Body of pancreas (tissue), 4 donors: ENCODE measurements at regions of chr5 and their contacts with region 1.

Region 1: GRCh38 chr5:141512390-141512910 is 23.6 kb downstream of the PCDHGC5 start:
- DNase-seq: peak; percentile 89 to 93 (median 90)
- ATAC-seq: peak; percentile 77
- H3K4me3 ChIP-seq: peak overlapping the region in 1 of 2 donors; percentile 11
- H3K27ac ChIP-seq: peak overlapping the region; percentile 16 to 65 (median 59)
- H3K4me1 ChIP-seq: peaks cover 24% of the 10 kb centered on the region
- H3K27me3 ChIP-seq: no peaks in the 10 kb centered on the region
- CTCF ChIP-seq: peak; percentile 66 to 91 (median 86)
- POLR2A ChIP-seq: peak in 1 of 3 donors; percentile 2

Region 2: DNA sequence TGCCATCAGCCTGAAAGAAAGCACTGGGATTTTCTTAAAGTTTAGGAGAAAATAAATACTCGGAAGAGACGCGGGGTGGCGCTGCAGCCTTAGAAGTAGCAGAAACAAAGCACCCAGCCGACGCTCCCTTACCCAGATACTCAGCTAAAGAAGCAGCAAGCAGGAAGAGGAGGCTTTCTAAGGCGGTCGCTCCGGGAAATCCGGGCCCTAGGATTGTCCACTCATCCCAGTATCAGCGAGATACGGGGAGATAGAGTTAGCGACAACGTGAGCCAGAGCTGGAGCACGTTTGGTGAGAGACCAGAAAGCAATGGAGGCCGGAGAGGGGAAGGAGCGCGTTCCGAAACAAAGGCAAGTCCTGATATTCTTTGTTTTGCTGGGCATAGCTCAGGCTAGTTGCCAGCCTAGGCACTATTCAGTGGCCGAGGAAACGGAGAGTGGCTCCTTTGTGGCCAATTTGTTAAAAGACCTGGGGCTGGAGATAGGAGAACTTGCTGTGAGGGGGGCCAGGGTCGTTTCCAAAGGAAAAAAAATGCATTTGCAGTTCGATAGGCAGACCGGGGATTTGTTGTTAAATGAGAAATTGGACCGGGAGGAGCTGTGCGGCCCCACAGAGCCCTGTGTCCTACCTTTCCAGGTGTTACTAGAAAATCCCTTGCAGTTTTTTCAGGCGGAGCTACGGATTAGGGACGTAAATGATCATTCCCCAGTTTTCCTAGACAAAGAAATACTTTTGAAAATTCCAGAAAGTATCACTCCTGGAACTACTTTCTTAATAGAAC is 417.8 kb before region 1 on chr5 and contains the start of gene PCDHB2:
- intact Hi-C with region 1: no loop called
- DNase-seq: peak in 3 of 4 donors; percentile 13 to 28 (median 23)
- ATAC-seq: peak; percentile 38
- H3K4me3 ChIP-seq: no peak within 1 kb of the TSS
- H3K27ac ChIP-seq: no peak within 1 kb of the TSS
- H3K4me1 ChIP-seq: no peaks in the 10 kb centered on the region
- H3K27me3 ChIP-seq: no peaks in the 10 kb centered on the region
- CTCF ChIP-seq: peak in 1 of 7 experiments; percentile 19
- POLR2A ChIP-seq: peak in 1 of 3 donors; percentile 14
- total RNA-seq, gene PCDHB2: 1.8 to 2.0 TPM

Region 3: DNA sequence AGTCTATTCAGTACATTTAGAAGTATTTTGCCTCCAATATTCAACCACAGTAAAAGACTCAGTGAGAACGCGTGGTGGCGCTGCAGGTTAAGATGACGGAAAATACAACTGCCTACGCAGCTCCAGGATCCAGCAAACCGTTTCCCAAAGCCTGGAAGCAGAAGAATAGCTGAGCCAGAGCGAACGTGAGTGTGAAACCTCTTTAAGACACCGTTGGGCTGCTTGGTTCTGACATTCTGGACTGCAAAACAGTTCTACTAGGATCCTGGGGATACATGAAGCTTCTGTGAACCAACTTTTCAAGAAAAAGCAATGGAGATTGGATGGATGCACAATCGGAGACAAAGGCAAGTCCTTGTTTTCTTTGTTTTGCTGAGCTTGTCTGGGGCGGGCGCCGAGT is 330.2 kb before region 1 on chr5 and contains the start of gene PCDHB16:
- intact Hi-C with region 1: no loop called
- DNase-seq: peak; percentile 59 to 71 (median 61)
- ATAC-seq: peak; percentile 40
- H3K4me3 ChIP-seq: no peak within 1 kb of the TSS
- H3K27ac ChIP-seq: no peak within 1 kb of the TSS
- H3K4me1 ChIP-seq: no peaks in the 10 kb centered on the region
- H3K27me3 ChIP-seq: no peaks in the 10 kb centered on the region
- CTCF ChIP-seq: peak in 5 of 7 experiments; percentile 21 to 57 (median 41)
- POLR2A ChIP-seq: peak in 1 of 3 donors; percentile 20
- total RNA-seq, gene PCDHB16: 2.1 to 4.6 TPM

Region 4: DNA sequence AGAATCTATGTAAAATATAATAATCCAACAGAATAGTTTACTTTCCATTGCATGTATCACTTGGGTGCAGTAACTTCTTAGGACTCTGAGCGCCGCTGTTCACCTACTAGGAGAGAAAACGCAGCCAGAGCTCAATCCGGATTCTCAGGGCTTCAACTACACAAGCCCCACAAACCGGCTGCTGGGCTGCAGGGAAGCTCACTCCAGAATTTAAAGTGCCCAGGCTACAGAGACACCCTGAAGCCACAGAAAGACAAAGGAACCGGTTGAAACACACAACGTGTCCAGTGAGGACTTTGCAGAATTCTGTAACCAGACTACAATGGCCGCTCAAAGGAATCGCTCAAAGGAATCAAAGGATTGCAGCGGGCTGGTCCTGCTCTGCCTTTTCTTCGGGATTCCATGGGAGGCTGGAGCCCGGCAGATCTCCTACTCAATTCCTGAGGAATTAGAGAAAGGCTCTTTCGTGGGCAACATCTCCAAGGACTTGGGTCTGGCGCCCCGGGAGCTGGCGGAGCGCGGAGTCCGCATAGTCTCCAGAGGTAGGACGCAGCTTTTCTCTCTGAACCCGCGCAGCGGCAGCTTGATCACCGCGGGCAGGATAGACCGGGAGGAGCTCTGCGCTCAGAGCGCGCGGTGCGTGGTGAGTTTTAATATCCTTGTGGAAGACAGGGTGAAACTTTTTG is 99.5 kb before region 1 on chr5 and contains the start of gene PCDHGA10:
- intact Hi-C with region 1: loop called (anchors 10 kb)
- DNase-seq: peak in 3 of 4 donors; percentile 40 to 54 (median 40)
- ATAC-seq: no peak
- H3K4me3 ChIP-seq: no peak within 1 kb of the TSS
- H3K27ac ChIP-seq: no peak within 1 kb of the TSS
- H3K4me1 ChIP-seq: no peaks in the 10 kb centered on the region
- H3K27me3 ChIP-seq: no peaks in the 10 kb centered on the region
- CTCF ChIP-seq: peak in 4 of 7 experiments; percentile 16 to 43 (median 32)
- POLR2A ChIP-seq: no peak
- total RNA-seq, gene PCDHGA10: 5.3 to 5.4 TPM